Endothelial cell of umbilical vein (primary cell): ENCODE measurements at regions of chr20 and their contacts with region 1.

Region 1: DNA sequence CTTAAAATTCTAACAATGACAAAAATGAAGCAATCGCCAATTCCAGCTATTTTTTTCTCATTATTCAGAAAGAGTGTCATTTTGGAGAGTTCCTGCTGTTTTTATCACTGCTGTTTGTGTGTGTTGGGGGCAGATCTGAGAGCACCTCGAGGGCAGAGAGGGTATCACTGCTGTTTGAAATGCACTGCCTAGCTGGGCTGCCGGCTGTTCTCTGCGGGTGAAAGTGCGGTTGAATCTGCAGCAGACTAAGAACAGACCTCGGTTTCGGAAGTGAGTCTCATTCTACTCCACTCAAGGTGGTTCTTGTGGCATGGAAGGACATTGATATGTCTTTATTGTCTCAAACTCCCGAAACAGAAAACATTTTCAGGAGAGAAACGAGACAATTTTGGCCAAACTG is 18.3 kb downstream of the INSM1 start:
- DNase-seq: no peak
- H3K4me3 ChIP-seq: no peak overlapping the region
- H3K27ac ChIP-seq: no peak overlapping the region
- H3K4me1 ChIP-seq: no peaks in the 10 kb centered on the region
- H3K27me3 ChIP-seq: peaks cover 0 to 4% of the 10 kb centered on the region in 2 experiments
- CTCF ChIP-seq: no peak
- POLR2A ChIP-seq: no peak

Region 2: DNA sequence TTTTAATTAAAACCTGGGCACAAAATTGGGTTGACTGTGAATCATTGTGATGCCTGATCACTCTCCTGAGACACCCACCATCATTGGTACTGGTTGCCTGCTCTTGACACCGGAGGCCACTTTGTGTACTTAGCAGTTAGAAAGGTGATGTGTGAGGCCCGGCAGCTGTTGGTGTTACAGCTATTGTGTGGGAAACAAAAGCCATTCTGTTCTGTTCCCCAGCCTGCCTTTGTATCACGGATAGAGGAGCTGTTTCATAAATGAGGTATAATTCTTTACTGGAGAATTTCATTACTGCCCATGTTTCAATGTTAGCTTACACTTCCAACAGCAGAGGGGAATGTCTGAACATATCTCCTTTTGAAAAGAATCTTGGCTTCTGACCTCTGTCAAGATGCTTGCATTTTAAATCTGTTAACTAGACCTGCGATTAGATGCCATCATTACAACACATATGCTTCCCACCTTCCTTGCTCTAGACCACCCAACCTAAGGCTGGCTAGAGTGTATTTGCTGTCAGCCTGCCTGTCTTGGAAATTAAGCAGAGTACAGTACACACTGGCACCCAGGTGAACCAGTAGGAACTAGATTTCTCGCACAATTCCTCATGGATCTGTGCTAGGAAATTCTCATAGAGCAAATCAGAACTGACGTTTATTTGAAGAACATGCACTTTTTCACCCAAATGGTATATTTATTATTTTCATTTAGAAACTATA is 160.7 kb before region 1 on chr20:
- CTCF ChIA-PET with region 1: no interaction called
- POLR2A ChIA-PET with region 1: interaction called, 10 read pairs
- dilution Hi-C with region 1: no loop called
- intact Hi-C with region 1: no loop called
- DNase-seq: no peak
- H3K4me3 ChIP-seq: no peak overlapping the region
- H3K27ac ChIP-seq: no peak overlapping the region
- H3K4me1 ChIP-seq: no peaks in the 10 kb centered on the region
- H3K27me3 ChIP-seq: no peaks in the 10 kb centered on the region
- CTCF ChIP-seq: no peak
- POLR2A ChIP-seq: no peak

Region 3: DNA sequence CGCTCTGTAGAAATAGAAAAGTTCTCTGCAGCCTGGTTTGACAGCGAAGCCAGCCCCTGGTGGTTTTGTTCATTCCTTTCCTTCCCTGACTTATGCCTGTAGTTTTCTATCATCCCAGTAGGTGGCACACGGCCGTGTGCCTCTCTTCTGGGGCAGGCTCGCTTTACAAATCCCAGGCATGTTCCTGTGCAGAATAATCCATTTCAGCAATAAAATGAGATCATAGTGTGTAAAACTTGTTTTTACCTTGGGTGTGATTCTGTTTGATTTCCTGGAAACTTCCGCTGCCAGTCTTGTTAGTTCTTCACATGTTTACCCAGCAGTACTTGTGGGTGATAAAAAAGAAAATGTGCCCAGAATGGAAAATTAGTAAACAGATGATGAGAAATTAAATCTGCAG is 25.7 kb before region 1 on chr20:
- CTCF ChIA-PET with region 1: no interaction called
- POLR2A ChIA-PET with region 1: no interaction called
- dilution Hi-C with region 1: no loop called
- intact Hi-C with region 1: no loop called
- DNase-seq: peak; percentile 69
- H3K4me3 ChIP-seq: no peak overlapping the region
- H3K27ac ChIP-seq: no peak overlapping the region
- H3K4me1 ChIP-seq: no peaks in the 10 kb centered on the region
- H3K27me3 ChIP-seq: peaks cover 43 to 54% of the 10 kb centered on the region in 2 experiments
- CTCF ChIP-seq: peak; percentile 69 to 85
- POLR2A ChIP-seq: no peak